ENCODE measurements at regions of chr1 and their contacts with region 1.

Region 1: DNA sequence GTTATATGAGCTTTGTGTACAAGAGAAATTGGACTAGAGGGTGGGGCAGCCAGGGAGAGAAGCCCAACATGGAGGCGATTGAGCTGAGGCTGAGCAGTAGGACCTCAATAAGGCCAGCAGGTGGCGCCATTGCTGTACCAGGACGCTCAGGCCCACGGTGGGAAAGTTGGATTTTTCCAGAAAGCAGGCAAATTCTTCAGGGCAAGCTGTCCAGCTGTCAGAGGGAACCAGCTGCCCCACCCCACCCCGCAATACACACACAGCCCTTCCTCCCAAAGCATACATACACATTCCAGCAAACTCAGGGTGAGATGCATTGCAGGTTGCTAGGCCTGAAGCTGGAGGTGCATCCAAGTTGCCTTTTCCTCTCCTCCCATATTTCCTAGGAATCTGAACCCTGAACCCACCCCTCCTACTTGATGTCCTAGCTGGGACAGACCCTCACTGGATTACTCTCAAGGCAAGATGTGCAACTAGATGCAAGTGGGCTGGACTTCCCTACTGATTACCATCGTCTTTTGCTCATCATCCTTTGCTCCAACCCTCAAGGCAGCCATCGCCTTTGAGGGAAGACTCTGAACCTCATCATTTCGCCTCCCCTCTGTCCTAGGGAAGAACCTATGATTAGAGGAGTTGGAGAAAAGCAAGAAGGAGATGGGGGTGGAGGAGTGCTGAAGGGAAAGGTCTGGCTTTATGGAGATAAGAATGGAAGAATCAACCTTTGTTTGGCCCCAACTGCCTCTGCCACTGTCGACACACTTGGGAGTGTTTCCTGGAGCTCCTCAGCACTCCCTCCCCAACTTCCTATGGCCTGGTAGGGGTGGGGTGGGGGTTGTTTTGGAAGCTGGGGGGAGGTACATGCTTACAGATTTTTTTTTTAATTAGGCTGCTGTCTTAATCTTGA is 25.5 kb downstream of the CD34 start:
- DNase-seq: peak; percentile 85
- H3K4me3 Mint-ChIP-seq: no peak overlapping the region
- H3K27ac Mint-ChIP-seq: peak overlapping the region; percentile 97
- H3K4me1 Mint-ChIP-seq: peaks cover 29% of the 10 kb centered on the region
- H3K27me3 Mint-ChIP-seq: no peaks in the 10 kb centered on the region

Region 2: GRCh38 chr1:207069858-207070506 is 815.4 kb before region 1 on chr1:
- CTCF ChIA-PET with region 1: no interaction called
- intact Hi-C with region 1: no loop called
- DNase-seq: no peak
- H3K4me3 Mint-ChIP-seq: no peak overlapping the region
- H3K27ac Mint-ChIP-seq: peak overlapping the region; percentile 39
- H3K4me1 Mint-ChIP-seq: peaks cover 32% of the 10 kb centered on the region
- H3K27me3 Mint-ChIP-seq: no peaks in the 10 kb centered on the region

Region 3: DNA sequence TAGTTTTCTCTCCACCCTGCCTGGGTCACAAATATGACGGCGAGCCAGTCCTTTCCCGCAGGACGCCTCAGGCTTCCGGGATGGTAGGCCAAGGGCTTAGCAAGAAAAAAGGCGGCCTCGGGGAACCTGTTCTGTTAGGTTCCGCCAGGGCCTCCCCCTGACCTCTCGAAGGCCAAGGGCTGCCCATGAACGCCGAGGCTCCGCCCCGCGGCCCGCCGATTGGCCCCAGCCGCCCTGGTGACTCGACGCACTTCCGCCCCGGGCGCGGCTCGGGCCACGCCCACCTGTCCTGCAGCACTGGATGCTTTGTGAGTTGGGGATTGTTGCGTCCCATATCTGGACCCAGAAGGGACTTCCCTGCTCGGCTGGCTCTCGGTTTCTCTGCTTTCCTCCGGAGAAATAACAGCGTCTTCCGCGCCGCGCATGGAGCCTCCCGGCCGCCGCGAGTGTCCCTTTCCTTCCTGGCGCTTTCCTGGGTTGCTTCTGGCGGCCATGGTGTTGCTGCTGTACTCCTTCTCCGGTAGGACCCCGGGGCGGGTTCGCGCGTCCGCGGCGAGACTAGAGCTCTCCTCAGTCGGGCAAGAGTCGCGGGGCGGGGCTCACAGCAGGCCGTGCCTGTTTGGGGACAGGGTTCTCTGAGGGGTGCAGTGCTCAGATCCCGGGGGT is 133.5 kb before region 1 on chr1 and contains the start of gene CD46:
- CTCF ChIA-PET with region 1: no interaction called
- intact Hi-C with region 1: loop called (anchors 1 kb)
- DNase-seq: peak; percentile 97
- H3K4me3 Mint-ChIP-seq: peak within 1 kb of the TSS; percentile 92
- H3K27ac Mint-ChIP-seq: peak within 1 kb of the TSS; percentile 98
- H3K4me1 Mint-ChIP-seq: peaks cover 59% of the 10 kb centered on the region
- H3K27me3 Mint-ChIP-seq: no peaks in the 10 kb centered on the region
- total RNA-seq, gene CD46: 91.0 to 93.4 TPM

Region 4: DNA sequence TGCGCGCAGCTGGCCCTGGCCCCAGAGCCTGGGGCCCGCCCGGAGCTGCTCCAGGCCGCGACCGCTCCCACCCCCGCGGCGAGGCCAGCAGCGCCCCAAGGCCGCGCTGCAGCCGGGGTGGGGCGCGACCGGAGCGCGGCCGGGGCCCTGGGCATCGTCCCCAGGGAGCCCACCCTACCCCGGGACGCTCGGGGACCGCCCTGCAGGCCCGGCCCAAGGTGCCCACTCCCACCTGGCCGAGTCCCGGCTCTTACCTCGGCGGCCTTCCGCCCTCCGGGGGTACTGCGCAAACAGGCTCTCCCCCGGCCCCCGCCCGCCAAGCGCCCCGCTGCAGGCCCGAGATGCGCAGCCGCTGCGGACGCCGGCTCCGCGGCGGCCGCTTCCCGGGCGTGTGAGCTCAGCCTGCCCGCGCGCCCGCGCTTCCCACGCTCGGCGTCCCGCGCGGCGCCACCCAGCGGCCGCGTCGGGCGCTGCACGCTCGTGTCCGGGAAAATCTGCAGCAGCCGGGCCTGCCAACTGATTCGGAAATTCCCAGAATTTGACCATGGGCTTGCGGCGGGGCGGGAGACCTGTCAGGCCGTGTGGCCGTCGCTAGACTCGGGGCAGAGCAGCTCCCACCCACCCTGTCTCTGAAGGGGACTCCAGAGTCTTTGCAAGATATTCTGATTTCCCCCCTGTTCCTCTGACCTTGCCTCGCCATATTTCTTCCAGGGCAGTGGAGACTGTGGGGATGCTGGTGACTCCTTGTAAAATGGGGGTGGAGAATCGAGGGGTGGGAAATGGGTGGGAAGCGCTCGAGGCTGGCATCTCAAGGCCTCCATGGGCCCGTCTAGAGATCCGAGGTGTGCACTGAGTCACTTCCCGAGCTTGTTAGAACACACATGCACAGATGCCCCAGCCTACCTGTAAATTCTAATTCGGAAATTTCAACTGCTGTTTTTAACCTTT is 16.3 kb before region 1 on chr1:
- CTCF ChIA-PET with region 1: interaction called, 188 read pairs
- intact Hi-C with region 1: loop called (anchors 1 kb)
- DNase-seq: peak; percentile 63
- H3K4me3 Mint-ChIP-seq: peak overlapping the region; percentile 92
- H3K27ac Mint-ChIP-seq: peak overlapping the region; percentile 92
- H3K4me1 Mint-ChIP-seq: peaks cover 81% of the 10 kb centered on the region
- H3K27me3 Mint-ChIP-seq: no peaks in the 10 kb centered on the region

Region 5: GRCh38 chr1:207903767-207904166 is 18.4 kb after region 1 on chr1:
- CTCF ChIA-PET with region 1: interaction called, 17 read pairs
- intact Hi-C with region 1: no loop called
- DNase-seq: no peak
- H3K4me3 Mint-ChIP-seq: no peak overlapping the region
- H3K27ac Mint-ChIP-seq: no peak overlapping the region
- H3K4me1 Mint-ChIP-seq: peaks cover 12% of the 10 kb centered on the region
- H3K27me3 Mint-ChIP-seq: peaks cover 8% of the 10 kb centered on the region

Region 6: DNA sequence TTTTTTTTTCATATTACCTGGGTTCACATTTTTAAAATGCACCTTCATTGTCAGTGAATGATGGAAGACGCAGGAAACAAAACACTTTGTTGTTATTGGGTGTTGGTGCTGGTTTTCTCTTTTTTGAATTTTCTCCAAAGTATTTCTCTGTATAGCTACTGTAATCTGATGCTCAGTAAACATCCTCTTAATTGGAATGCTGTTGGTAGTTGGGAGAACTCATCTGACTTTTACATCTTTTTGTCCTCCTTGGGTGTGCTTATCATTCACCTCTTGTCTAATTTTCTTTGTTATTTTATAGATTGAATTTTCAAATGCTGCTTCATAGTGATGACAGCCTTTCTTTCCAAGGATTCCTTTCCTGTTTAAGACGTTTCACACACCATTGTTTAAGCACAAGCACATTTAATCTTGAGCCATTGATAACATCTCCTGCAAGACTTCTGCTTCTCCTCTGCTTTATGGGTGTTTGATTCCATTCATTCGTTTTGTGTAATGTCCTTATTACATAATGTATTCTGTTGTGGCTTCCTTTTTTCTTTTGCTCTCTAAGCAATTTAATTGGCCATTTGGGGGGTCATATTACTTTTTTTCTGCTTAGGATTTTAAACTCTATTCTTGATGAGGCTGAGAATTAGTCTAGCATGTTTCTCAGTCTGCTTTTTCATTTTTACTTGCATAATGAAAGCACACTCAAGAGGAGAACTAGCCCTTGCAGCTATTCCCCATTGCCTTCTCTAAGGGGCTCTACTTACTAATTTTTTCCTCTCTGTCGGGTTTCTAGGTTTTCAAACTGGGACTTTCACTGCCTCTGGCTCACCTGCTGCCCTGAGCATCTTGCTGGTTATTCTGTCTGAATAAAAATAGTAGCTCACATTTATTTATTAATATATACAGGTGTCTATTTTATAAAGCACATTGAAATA is 67.5 kb after region 1 on chr1:
- CTCF ChIA-PET with region 1: interaction called, 204 read pairs
- intact Hi-C with region 1: no loop called
- DNase-seq: no peak
- H3K4me3 Mint-ChIP-seq: no peak overlapping the region
- H3K27ac Mint-ChIP-seq: no peak overlapping the region
- H3K4me1 Mint-ChIP-seq: no peaks in the 10 kb centered on the region
- H3K27me3 Mint-ChIP-seq: peaks cover 12% of the 10 kb centered on the region

Region 7: GRCh38 chr1:207997486-207998268 is 112.3 kb after region 1 on chr1:
- CTCF ChIA-PET with region 1: interaction called, 21 read pairs
- intact Hi-C with region 1: loop called (anchors 1 kb)
- DNase-seq: peak; percentile 74
- H3K4me3 Mint-ChIP-seq: no peak overlapping the region
- H3K27ac Mint-ChIP-seq: no peak overlapping the region
- H3K4me1 Mint-ChIP-seq: no peaks in the 10 kb centered on the region
- H3K27me3 Mint-ChIP-seq: no peaks in the 10 kb centered on the region

Region 8: DNA sequence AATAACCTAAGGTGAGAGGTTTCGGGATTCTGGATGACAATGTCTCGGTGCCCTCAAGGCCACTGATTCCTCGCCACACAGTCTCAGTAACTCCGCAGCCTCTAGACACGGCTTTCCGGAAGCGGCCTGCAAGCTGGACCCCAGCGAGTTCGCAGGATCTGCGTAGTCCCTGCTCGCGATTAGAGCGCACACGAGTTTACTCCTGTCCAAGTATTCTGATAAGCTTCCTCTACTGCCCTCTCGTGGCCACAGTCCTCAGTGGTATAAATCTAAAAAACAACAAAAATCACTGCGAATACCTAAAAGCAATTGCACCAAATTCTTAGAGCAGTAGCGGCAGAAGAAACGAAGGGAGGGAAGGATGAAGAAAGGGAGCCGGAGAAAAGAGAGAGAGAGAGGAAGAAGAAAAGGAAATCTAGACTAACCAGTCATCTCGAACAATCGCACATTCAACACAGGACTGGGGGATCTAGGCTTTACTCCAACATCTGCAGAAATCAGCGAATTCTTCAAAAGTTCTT is 359.9 kb after region 1 on chr1:
- CTCF ChIA-PET with region 1: no interaction called
- intact Hi-C with region 1: loop called (anchors 1 kb)
- DNase-seq: peak; percentile 92
- H3K4me3 Mint-ChIP-seq: peak overlapping the region; percentile 70
- H3K27ac Mint-ChIP-seq: no peak overlapping the region
- H3K4me1 Mint-ChIP-seq: peaks cover 10% of the 10 kb centered on the region
- H3K27me3 Mint-ChIP-seq: peaks cover 25% of the 10 kb centered on the region

Measured in activated naive CD4-positive, alpha-beta T cell treated with anti-CD3 and anti-CD28 coated beads for 36 hours (primary cell).